ENCODE measurements at regions of chr7 and their contacts with region 1.

Region 1: DNA sequence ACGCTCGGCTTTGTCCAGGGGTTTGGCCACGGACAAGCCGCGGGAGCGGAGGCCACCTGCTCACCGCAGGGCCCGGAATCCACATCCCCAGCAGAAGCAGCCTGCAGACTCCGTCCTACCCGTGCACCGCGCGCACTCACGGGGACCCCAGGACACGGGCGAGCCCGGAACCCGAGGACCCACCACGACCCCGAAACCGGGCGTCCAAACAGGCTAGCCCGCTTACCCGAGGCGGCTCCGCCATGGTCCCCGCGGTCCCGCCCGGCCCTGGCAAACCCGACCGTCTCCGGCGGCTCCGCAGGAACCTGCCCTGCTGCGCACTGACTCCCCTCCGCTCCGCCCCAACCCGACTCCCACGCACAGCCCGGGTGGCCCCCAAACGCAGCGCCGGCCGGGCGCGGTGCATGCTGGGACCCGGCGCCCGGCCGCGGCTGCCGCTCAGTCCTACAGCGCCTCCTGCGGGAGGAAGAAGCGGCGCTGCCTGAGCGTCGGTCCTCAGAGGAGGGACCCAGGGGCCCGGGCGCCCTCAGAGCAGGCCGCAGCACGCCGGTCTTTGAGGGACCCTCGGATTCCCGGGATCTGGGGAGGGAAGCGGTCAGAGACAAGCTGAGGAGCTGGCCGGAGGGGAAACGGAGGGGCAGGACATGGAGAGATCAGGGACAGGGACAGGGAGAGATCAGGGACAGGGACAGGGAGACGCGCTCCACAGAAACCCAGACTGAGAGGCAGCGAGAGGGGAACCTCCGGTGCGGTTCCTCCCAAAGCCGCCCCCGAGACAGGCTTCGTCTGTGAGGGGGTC is at the start of gene ZNF786:
- DNase-seq: peak; percentile 85
- H3K4me3 Mint-ChIP-seq: peak within 1 kb of the TSS; percentile 100
- H3K27ac Mint-ChIP-seq: peak within 1 kb of the TSS; percentile 100
- H3K4me1 Mint-ChIP-seq: peaks cover 12% of the 10 kb centered on the region
- H3K27me3 Mint-ChIP-seq: no peaks in the 10 kb centered on the region
- total RNA-seq, gene ZNF786: 10.0 and 10.3 TPM in 2 replicates

Region 2: DNA sequence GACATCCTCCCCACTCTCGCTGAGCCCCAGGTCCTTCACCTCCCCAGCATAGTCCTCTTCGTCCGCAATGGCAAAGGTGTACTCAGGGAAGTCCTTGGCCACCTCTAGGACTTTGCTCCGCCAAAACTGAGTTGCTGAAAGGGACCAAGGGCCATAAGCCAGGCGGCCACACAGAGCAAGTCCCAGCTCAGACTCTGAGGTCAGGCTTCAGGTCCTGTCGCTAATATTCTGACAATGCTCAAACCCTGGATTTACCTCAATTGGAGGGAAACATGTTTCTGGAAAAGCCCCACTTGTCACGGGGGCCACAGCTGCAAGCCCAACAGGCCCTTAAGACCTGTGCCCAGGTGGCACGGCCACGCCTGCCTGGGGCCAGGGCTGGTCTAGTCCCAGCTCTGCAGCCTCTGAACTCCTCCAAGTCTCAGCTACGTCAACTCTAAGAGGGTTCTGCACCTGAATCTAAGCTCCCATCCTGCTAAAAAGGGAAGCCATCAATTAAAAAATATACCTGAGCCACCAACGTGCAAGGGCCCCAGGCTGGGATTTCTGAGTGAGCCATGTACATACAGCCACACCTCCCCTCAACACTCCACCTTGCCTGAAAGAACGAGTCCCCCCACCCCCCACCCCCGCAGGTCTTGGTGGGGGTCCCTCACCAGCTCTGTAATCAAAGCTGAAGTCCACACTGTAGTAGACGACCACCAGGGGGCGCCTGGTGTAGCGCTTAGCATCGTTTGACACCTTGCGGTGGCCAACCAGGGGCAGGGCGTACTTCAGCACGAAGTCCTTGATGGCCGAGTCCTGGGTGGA is 85.2 kb before region 1 on chr7:
- intact Hi-C with region 1: loop called (anchors 1 kb)
- DNase-seq: peak; percentile 60
- H3K4me3 Mint-ChIP-seq: no peak overlapping the region
- H3K27ac Mint-ChIP-seq: no peak overlapping the region
- H3K4me1 Mint-ChIP-seq: peaks cover 2% of the 10 kb centered on the region
- H3K27me3 Mint-ChIP-seq: no peaks in the 10 kb centered on the region

Region 3: GRCh38 chr7:149067876-149068275 is 22.7 kb before region 1 on chr7:
- intact Hi-C with region 1: loop called (anchors 1 kb)
- DNase-seq: no peak
- H3K4me3 Mint-ChIP-seq: no peak overlapping the region
- H3K27ac Mint-ChIP-seq: no peak overlapping the region
- H3K4me1 Mint-ChIP-seq: peaks cover 5% of the 10 kb centered on the region
- H3K27me3 Mint-ChIP-seq: no peaks in the 10 kb centered on the region